ENCODE measurements at regions of chr19 and their contacts with region 1.

Region 1: DNA sequence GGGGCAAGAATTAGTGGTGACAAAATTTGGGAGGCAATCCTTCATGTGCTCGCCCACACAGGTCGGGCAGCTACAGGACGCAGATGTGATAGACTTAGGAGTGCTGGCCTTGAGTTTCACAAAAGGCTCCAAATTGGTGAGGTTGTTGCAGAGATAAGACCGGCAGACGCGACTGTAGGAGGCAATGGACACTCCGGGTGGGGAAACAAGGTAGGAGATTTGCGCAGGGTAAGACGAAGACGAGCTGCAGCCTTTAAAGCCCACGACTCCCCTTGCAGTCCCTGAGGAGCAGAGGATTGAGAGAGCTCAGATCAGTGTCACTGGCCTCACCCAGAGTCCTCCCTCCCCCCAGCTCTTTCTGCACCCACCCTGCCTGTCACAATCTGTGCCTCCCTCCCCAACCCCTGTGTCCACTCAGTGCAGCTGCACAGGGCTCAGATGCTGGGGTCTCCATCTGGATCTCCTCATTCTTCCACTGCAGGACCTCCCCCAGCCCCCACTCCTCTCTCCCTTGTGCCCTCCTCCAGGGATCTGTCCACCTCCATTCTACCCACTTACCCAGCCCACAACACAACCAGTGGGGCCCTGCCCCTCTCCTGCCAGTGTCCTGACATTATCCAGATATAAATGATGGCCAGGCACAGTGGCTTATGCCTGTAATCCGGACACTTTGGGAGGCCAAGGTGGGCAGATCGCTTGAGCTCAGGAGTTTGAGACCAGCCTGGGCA is 6.3 kb downstream of the LYPD4 start:
- DNase-seq: no peak
- ATAC-seq: no peak
- H3K4me3 Mint-ChIP-seq: no peak overlapping the region
- H3K27ac Mint-ChIP-seq: no peak overlapping the region
- H3K4me1 Mint-ChIP-seq: no peaks in the 10 kb centered on the region
- H3K27me3 Mint-ChIP-seq: peaks cover 29% of the 10 kb centered on the region

Region 2: GRCh38 chr19:41821003-41821735 is 17.0 kb before region 1 on chr19:
- CTCF ChIA-PET with region 1: interaction called, 11 read pairs
- POLR2A ChIA-PET with region 1: no interaction called
- DNase-seq: peak; percentile 66
- ATAC-seq: peak; percentile 88
- H3K4me3 Mint-ChIP-seq: no peak overlapping the region
- H3K27ac Mint-ChIP-seq: no peak overlapping the region
- H3K4me1 Mint-ChIP-seq: no peaks in the 10 kb centered on the region
- H3K27me3 Mint-ChIP-seq: peaks cover 16% of the 10 kb centered on the region

Region 3: DNA sequence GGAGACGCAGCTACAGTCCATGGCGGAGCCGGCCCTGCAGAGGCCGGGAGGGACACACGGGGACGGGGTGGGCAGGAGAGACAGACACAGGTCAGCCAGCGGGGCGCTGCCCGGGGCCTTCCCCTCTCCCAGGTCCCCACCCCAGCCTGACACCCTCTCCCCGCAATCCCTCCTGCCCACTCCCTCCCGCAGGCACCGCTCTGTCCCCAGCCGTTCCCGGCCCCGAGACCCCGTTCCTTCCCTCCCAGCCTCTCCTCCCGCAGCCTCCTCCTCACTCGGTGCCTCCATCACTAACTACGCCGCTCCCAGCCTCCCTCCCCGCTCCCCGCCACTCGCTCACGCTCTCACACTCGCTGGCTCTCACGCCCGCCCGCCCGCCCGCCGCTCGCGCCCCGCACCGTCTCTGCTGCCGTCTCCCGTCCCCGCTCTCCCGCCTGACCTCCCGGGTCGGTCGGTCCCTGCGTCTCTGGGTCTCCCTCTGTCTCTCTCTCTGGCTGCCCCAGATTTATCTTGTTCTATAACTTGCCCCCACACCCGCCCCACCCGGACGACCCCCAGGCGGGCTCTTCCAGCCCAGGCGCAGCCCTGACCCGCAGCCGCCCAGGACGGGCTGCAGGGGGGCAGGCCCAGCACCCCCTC is 74.9 kb after region 1 on chr19:
- CTCF ChIA-PET with region 1: no interaction called
- POLR2A ChIA-PET with region 1: no interaction called
- DNase-seq: peak; percentile 44
- ATAC-seq: peak; percentile 28
- H3K4me3 Mint-ChIP-seq: no peak overlapping the region
- H3K27ac Mint-ChIP-seq: no peak overlapping the region
- H3K4me1 Mint-ChIP-seq: peaks cover 6% of the 10 kb centered on the region
- H3K27me3 Mint-ChIP-seq: peaks cover 24% of the 10 kb centered on the region

Measured in activated CD8-positive, alpha-beta T cell treated with anti-CD3 and anti-CD28 coated beads, Interleukin-2, amount 10 ng/mL, durations not matched to agents 7 days and 5 days (primary cell).